Common myeloid progenitor, CD34-positive (primary cell): ENCODE measurements at regions of chr4 and their contacts with region 1.

Region 1: GRCh38 chr4:185597532-185598188 is 62.4 kb upstream of the PDLIM3 start:
- DNase-seq: peak; percentile 72 to 84 (median 79)
- H3K4me3 ChIP-seq: no peak overlapping the region
- H3K27ac ChIP-seq: no peak overlapping the region
- H3K4me1 ChIP-seq: no peaks in the 10 kb centered on the region
- H3K27me3 ChIP-seq: peaks cover 6 to 57% (median 15%) of the 10 kb centered on the region in 5 experiments

Region 2: GRCh38 chr4:185343726-185344581 is 253.7 kb before region 1 on chr4:
- CTCF ChIA-PET with region 1: no interaction called
- POLR2A ChIA-PET with region 1: no interaction called
- DNase-seq: peak in 1 of 3 donors; percentile 9
- H3K4me3 ChIP-seq: no peak overlapping the region
- H3K27ac ChIP-seq: no peak overlapping the region
- H3K4me1 ChIP-seq: peaks cover 0 to 11% (median 2%) of the 10 kb centered on the region in 4 experiments
- H3K27me3 ChIP-seq: no peaks in the 10 kb centered on the region

Region 3: GRCh38 chr4:185471235-185472102 is 126.2 kb before region 1 on chr4 and contains the start of gene CCDC110:
- CTCF ChIA-PET with region 1: interaction called, 21 read pairs
- POLR2A ChIA-PET with region 1: no interaction called
- DNase-seq: peak; percentile 81 to 84 (median 83)
- H3K4me3 ChIP-seq: peak within 1 kb of the TSS; percentile 26 to 74 (median 60)
- H3K27ac ChIP-seq: no peak within 1 kb of the TSS
- H3K4me1 ChIP-seq: peaks cover 4 to 17% (median 14%) of the 10 kb centered on the region in 4 experiments
- H3K27me3 ChIP-seq: peaks cover 9 to 74% (median 27%) of the 10 kb centered on the region in 5 experiments

Region 4: DNA sequence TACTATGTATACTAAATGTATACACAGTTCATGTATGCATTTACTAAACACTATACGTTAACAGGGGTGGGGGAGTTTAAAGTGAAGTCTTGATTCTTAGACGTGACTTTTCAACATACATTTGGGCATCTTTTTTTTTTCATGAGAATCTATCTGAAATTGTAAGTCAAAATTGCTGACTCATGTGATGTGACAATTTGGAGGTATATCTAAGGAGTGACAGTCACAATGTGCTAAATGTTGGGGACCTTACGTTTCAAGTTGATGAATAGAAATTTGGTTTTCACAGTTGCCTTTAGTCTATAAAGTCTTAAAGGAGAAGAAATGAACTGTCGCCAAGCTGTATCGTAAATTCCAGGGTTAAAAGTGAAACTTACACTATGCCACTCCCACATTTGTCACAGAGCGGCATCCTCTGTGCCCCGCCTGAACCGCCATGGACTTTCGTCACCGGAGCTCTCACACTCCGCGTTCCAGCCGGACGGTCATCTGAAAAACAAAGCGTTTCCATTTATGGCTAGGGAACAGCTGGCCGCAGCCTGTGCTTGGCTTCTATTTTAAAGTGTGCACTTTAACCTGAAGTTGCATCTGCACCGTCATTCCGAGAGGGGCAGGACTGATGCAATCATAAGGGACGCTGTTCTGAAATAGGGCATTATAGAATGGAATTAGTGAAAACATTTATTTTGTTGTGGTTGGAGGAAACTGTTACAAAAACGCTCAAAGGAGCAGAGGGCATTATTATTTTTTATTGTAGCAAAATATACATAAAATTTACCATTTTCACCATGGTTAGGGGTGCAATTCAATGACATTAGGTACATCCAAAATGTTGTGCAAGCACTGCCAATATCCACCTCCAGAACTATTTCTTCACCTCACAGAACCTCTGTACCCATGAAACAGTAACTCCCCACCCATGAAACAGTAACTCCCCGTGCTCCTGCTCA is 93.3 kb before region 1 on chr4:
- CTCF ChIA-PET with region 1: no interaction called
- POLR2A ChIA-PET with region 1: no interaction called
- DNase-seq: no peak
- H3K4me3 ChIP-seq: no peak overlapping the region
- H3K27ac ChIP-seq: no peak overlapping the region
- H3K4me1 ChIP-seq: no peaks in the 10 kb centered on the region
- H3K27me3 ChIP-seq: peaks cover 9 to 87% (median 43%) of the 10 kb centered on the region in 5 experiments

Region 5: DNA sequence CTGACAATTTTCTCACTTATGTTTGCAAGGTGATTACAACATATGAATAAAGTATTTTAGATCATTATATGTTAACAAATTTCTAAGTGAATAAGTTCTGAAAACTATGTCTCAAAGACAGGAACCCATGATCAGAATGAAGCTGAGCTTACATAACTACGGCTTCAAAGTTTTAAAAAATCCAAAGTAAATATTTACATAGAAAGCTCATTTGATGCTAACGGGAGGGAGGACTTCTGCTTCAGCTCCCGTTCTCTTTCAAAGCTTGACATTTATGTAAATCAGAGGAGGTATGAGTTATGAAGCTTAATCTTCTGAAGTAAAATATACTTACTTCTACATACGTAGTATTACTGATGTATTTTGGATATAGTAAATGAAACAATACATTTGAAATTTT is 10.5 kb after region 1 on chr4:
- CTCF ChIA-PET with region 1: interaction called, 13 read pairs
- POLR2A ChIA-PET with region 1: no interaction called
- DNase-seq: no peak
- H3K4me3 ChIP-seq: no peak overlapping the region
- H3K27ac ChIP-seq: no peak overlapping the region
- H3K4me1 ChIP-seq: no peaks in the 10 kb centered on the region
- H3K27me3 ChIP-seq: peaks cover 2 to 31% (median 8%) of the 10 kb centered on the region in 5 experiments

Region 6: DNA sequence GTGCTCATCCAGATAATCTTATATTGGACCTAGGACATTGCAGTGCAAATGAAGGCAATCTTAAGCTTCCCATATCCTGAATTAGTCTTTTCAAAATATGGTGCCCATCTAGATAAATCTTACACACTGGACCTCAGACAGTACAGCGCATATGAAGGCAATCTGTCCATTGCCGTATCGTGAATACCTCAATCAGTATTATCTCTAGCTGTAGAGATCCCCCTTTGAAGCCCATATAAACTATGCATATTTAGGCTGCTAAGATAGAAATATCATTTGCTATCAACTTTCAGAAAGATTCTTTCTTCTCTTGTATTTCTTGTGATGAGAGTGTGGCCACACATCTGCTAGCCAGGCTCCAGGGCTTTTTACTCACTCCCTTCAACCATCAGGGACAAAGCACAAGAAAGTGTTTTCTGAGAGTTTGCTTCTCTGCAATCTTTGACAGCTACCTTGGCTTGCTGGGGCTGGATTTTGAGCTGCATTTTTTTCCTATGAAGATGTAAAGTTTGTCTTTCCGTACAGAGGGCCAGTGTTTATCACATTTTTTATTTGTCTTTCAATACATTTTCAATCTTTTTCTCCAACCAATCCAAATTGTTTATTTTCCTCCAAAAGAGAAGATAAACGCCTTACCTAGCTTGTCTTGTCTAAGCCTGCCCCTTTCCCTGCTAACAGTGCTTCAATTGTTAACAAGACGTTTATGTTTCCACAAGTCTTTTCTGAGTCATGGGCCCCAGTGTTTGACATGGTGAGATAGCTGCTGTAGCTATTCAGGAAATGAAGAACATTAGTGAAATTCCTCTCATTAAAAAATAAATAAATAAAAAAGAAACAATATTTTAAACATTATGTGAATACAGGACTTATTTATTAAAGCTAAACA is 1183.6 kb after region 1 on chr4:
- CTCF ChIA-PET with region 1: no interaction called
- POLR2A ChIA-PET with region 1: no interaction called
- DNase-seq: no peak
- H3K4me3 ChIP-seq: no peak overlapping the region
- H3K27ac ChIP-seq: no peak overlapping the region
- H3K4me1 ChIP-seq: peaks cover 0 to 2% (median 0%) of the 10 kb centered on the region in 4 experiments
- H3K27me3 ChIP-seq: no peaks in the 10 kb centered on the region